CD8-positive, alpha-beta memory T cell (primary cell): ENCODE measurements at regions of chr5 and their contacts with region 1.

Region 1: GRCh38 chr5:176596689-176597416 is 13.1 kb downstream of the GPRIN1 start:
- DNase-seq: peak; percentile 44 to 76 (median 70)
- H3K4me3 ChIP-seq: peak overlapping the region; percentile 37
- H3K4me3 Mint-ChIP-seq: peak overlapping the region; percentile 64 to 84 (median 78)
- H3K27ac ChIP-seq: no peak overlapping the region
- H3K27ac Mint-ChIP-seq: peak overlapping the region in 2 of 8 donors; percentile 52 to 70
- H3K4me1 ChIP-seq: peaks cover 6% of the 10 kb centered on the region
- H3K4me1 Mint-ChIP-seq: peaks cover 3 to 9% (median 6%) of the 10 kb centered on the region in 3 donors
- H3K27me3 ChIP-seq: no peaks in the 10 kb centered on the region
- H3K27me3 Mint-ChIP-seq: peaks cover 2 to 4% of the 10 kb centered on the region in 2 donors

Region 2: DNA sequence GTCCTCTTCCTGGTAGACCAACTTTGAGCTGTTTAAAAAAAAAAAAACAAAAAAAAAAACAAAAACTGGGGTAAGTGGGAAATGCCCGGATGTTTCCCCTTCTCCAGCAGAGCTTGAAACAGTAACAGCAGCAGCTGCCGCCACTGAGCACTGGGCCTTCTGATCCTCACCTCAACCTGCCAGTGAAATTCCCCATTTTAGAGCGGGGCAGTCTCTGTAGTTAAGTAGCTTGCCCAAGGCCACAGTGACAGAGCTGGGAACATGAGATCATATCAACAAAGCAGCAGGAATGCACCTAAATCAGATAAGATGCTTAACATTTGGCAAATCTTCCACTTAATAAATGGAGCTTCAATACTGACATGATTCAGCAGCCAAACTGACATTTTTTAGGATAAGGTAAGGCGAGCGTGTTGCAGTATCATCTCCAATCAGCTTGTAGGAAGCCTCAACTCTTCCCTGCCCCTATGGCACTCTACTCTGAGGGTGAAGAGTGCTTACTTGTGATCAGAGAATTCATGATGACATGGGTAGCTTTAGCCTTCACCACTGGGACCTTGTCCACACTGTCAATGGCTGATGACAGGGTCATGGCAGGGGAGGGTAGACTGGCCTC is 244.6 kb before region 1 on chr5:
- CTCF ChIA-PET with region 1: no interaction called
- POLR2A ChIA-PET with region 1: interaction called, 10 read pairs
- DNase-seq: no peak
- H3K4me3 ChIP-seq: no peak overlapping the region
- H3K4me3 Mint-ChIP-seq: no peak overlapping the region
- H3K27ac ChIP-seq: no peak overlapping the region
- H3K27ac Mint-ChIP-seq: peak overlapping the region in 6 of 8 donors; percentile 4 to 75 (median 55)
- H3K4me1 ChIP-seq: no peaks in the 10 kb centered on the region
- H3K4me1 Mint-ChIP-seq: peaks cover 16 to 42% (median 30%) of the 10 kb centered on the region in 3 donors
- H3K27me3 ChIP-seq: no peaks in the 10 kb centered on the region
- H3K27me3 Mint-ChIP-seq: no peaks in the 10 kb centered on the region

Region 3: DNA sequence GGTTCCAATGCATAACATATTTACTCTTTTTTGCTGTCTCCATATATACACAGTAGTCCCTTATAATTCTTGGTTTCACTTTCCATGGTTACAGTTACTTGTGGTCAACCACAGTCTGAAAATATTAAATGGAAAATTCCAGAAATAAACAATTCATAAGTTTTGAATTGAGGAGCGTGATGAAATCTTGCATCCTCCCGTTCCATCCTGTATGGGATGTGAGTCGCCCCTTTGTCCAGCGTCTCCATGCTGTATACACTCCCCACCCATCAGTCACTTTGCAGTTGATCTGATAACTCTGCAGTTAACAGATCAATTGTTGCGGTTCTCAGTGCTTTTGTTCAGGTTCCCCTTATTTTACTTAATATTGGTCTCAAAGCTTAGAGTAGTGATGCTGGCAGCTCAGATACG is 160.2 kb before region 1 on chr5:
- CTCF ChIA-PET with region 1: no interaction called
- POLR2A ChIA-PET with region 1: no interaction called
- DNase-seq: no peak
- H3K4me3 ChIP-seq: no peak overlapping the region
- H3K4me3 Mint-ChIP-seq: peak overlapping the region; percentile 42 to 77 (median 66)
- H3K27ac ChIP-seq: no peak overlapping the region
- H3K27ac Mint-ChIP-seq: peak overlapping the region in 2 of 8 donors; percentile 1 to 6
- H3K4me1 ChIP-seq: peaks cover 8% of the 10 kb centered on the region
- H3K4me1 Mint-ChIP-seq: peaks cover 7 to 12% (median 9%) of the 10 kb centered on the region in 3 donors
- H3K27me3 ChIP-seq: no peaks in the 10 kb centered on the region
- H3K27me3 Mint-ChIP-seq: peaks cover 6 to 13% of the 10 kb centered on the region in 2 donors

Region 4: DNA sequence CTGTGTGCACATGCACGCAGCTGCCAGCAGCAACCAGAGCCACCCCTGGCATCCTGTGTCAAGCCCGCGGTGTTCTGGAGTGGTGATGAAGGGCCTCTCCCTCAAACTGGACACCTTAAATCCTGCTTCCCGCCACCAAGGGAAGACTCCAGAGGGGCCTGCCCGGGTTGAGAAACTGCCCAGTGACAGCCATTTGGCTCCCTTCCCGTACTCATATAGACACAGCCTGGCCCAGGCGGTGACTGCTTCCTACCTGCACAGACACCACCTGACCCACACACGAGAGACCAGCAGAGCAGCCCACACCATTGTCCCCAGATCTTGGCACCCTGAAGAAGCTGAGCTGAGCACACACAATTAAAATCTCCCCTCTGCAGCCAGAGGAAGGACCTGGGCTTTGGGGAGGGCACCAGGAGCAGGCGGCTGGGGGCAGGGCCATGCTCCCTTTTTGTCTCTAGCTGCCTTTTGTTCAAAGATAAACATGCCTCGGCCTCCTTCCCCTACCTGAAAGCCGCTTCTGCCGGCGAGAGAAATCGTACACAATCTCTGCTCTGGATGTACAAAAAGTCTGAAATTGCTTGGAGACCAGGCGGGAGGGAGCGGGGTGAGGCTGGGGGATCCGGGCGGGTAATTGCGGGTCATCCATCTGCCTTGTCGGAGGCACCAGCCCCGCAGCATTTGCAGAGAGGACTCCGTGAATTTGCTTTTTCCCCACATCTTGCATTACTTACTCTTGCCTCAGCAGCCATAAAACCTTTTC is 128.8 kb after region 1 on chr5:
- CTCF ChIA-PET with region 1: no interaction called
- POLR2A ChIA-PET with region 1: no interaction called
- DNase-seq: no peak
- H3K4me3 ChIP-seq: no peak overlapping the region
- H3K4me3 Mint-ChIP-seq: peak overlapping the region in 4 of 7 donors; percentile 1 to 69 (median 40)
- H3K27ac ChIP-seq: no peak overlapping the region
- H3K27ac Mint-ChIP-seq: peak overlapping the region in 2 of 8 donors; percentile 64 to 84
- H3K4me1 ChIP-seq: peaks cover 19% of the 10 kb centered on the region
- H3K4me1 Mint-ChIP-seq: peaks cover 29 to 39% (median 32%) of the 10 kb centered on the region in 3 donors
- H3K27me3 ChIP-seq: no peaks in the 10 kb centered on the region
- H3K27me3 Mint-ChIP-seq: peaks cover 7 to 56% of the 10 kb centered on the region in 2 donors